ENCODE measurements at regions of chr5 and their contacts with region 1.

Region 1: DNA sequence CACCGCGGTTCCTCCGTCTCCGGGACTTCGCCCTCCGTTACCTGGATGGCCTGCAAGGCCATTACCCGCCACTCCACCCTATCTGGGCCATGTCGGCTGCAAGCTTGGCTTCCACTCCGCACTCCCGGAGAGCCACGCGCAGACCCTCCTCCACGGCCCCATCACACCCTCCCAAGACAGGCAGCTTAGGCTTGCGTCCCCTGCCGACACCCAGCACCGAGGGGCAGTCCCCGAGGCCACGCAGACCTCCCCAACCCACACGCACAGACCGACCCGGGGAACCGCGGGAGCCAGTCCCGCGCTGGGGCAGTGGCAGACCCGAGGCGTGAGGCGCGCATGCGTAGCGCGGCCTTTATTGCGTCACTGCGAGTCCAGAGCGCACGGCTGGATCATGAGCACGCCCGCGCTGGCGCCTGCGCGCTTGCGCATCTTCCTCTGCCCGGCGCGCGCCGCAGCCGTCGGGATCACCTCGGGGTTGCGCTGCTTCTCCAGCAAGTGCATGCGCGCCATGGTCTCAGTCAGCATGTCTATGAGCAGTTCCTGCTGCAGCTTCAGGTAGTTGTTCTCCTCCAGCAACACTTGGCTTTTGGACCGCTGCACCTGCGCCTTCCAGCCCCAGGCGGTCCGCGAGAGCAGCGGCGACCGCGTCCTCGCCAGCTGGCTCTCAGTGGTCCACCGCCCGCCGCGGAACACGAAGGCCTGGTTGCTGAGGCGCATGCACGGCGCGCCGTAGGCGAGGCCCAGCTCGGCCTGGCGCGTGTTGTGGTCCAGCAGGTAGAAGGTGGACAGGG is 2.4 kb downstream of the CBY3 start:
- DNase-seq: peak; percentile 88
- ATAC-seq: peak; percentile 92
- H3K4me3 ChIP-seq: peak overlapping the region; percentile 92 to 98
- H3K27ac ChIP-seq: peak overlapping the region; percentile 83
- H3K4me1 ChIP-seq: peaks cover 12 to 18% of the 10 kb centered on the region in 2 experiments
- H3K27me3 ChIP-seq: no peaks in the 10 kb centered on the region
- CTCF ChIP-seq: no peak
- POLR2A ChIP-seq: peak; percentile 97
- RAD21 ChIP-seq: no peak

Region 2: DNA sequence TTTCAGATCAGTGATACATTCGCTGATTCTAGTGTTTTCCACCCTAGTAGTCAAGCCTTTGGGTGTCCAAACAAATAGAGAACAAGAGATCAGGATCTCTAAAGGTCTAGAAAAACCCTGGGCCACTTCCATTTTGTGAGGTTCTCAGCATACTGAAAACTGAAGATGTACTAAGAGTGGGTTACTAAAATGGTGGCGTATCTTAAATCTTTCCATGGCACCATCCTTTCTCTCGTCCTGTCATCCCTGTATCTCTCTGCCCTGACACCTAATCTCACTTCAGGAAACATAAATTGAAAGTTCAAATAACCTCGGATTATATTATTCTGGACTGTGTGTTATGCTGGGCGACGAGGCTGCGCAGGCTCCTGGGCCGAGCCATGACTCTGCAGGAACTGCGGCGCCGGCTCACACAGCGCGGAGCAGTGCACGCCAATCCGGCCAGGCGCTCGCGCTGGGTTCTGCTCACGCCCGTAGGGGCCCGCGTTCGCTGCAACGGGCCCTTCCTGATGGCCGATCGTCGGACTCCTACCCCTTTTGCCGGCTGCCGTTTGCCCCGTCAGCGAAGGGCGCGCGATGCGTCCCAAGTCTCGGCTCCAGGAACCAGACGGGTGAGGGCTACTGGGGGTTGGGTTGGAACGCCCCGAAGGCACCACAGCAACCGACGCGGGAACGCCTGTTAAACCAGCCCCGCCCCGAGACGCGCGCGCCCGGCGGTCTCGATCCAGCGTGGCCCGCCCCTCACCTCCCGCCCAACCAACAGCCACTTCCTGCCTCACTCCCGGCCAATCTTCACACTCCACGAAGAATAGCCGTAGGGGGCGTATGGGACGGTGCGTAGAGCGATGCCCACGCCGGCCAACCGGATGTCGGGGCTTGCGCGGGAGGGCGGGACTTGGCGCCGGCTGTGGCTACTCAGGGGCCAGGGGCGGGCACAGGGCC is 19.8 kb after region 1 on chr5:
- CTCF ChIA-PET with region 1: no interaction called
- POLR2A ChIA-PET with region 1: no interaction called
- RAD21 ChIA-PET with region 1: no interaction called
- intact Hi-C with region 1: loop called (anchors 1 kb)
- DNase-seq: peak; percentile 97
- ATAC-seq: peak; percentile 90
- H3K4me3 ChIP-seq: peak overlapping the region; percentile 83 to 87
- H3K27ac ChIP-seq: peak overlapping the region; percentile 98
- H3K4me1 ChIP-seq: peaks cover 7 to 30% of the 10 kb centered on the region in 2 experiments; a peak in 3 of 4 replicates
- H3K27me3 ChIP-seq: no peaks in the 10 kb centered on the region
- CTCF ChIP-seq: no peak
- POLR2A ChIP-seq: peak; percentile 30
- RAD21 ChIP-seq: no peak

Measured in HCT116 (cell line).